WTC11 (cell line): ENCODE measurements at regions of chr18 and their contacts with region 1.

Region 1: DNA sequence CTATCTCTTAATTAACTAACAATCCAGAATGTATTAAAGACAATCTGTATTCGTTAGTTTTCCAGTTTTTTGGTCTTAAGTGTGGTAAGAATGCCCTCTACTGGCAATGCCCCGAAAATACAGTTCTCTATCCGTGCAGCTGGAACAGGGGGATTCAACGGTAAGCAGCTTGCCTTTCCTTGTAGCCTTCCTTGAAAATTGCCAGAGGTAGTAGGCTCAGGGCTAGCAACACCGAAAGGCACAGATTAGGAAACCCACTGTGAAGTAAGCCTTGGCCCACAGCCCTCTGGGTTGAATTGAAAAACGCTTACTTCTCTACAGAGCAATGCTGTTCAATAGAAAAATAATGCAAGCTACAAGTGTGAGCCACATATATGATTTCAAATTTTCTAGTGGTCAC is 17.1 kb upstream of the VPS4B start:
- DNase-seq: peak; percentile 50
- ATAC-seq: peak; percentile 96
- H3K4me3 Mint-ChIP-seq: no peak overlapping the region
- H3K27ac Mint-ChIP-seq: no peak overlapping the region
- H3K4me1 Mint-ChIP-seq: no peaks in the 10 kb centered on the region
- H3K27me3 Mint-ChIP-seq: no peaks in the 10 kb centered on the region; the same call in 1 of the 2 replicates
- CTCF ChIP-seq: peak; percentile 53

Region 2: GRCh38 chr18:63339920-63340484 is 99.3 kb before region 1 on chr18:
- CTCF ChIA-PET with region 1: interaction called, 27 read pairs
- POLR2A ChIA-PET with region 1: no interaction called
- DNase-seq: peak; percentile 47
- ATAC-seq: peak; percentile 84
- H3K4me3 Mint-ChIP-seq: peak overlapping the region; percentile 11
- H3K27ac Mint-ChIP-seq: peak overlapping the region; percentile 67
- H3K4me1 Mint-ChIP-seq: peaks cover 21% of the 10 kb centered on the region
- H3K27me3 Mint-ChIP-seq: no peaks in the 10 kb centered on the region
- CTCF ChIP-seq: peak; percentile 65

Region 3: GRCh38 chr18:63465059-63465458 is 25.7 kb after region 1 on chr18:
- CTCF ChIA-PET with region 1: no interaction called
- POLR2A ChIA-PET with region 1: no interaction called
- DNase-seq: no peak
- ATAC-seq: no peak
- H3K4me3 Mint-ChIP-seq: no peak overlapping the region
- H3K27ac Mint-ChIP-seq: no peak overlapping the region
- H3K4me1 Mint-ChIP-seq: no peaks in the 10 kb centered on the region
- H3K27me3 Mint-ChIP-seq: no peaks in the 10 kb centered on the region
- CTCF ChIP-seq: no peak

Region 4: DNA sequence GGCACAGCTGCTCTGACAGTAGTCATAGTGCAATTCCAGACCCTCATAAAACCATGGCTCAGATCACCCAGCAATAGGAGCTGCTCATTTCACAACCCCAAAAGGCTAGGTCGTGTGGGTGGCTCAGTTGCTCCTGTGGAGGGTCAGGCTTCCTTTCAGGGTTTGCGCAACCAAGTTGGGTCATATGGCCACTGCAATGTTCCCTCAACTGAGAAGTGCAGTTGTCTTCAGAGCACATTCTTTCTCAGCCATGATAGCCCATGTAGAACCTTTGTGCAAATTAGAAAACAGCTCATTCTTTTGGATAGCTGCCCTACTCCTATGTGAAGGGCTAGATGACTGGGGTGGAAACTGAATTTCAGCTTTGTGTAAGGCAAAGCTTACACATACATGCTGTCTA is 151.0 kb after region 1 on chr18:
- CTCF ChIA-PET with region 1: no interaction called
- POLR2A ChIA-PET with region 1: no interaction called
- DNase-seq: no peak
- ATAC-seq: no peak
- H3K4me3 Mint-ChIP-seq: no peak overlapping the region
- H3K27ac Mint-ChIP-seq: no peak overlapping the region
- H3K4me1 Mint-ChIP-seq: peaks cover 4% of the 10 kb centered on the region
- H3K27me3 Mint-ChIP-seq: no peaks in the 10 kb centered on the region
- CTCF ChIP-seq: no peak